Activated T-helper 1 cell treated with anti-CD3 and anti-CD28 coated beads, Interleukin-12 subunit alpha, Interleukin-12 subunit beta, Interleukin-2, Interleukin-4 antibody, amounts not matched to agents 30 ng/mL and 10 ng/mL and 1 ng/mL, durations not matched to agents 14 hours and 24 hours and 36 hours (primary cell): ENCODE measurements at regions of chr5 and their contacts with region 1.

Region 1: DNA sequence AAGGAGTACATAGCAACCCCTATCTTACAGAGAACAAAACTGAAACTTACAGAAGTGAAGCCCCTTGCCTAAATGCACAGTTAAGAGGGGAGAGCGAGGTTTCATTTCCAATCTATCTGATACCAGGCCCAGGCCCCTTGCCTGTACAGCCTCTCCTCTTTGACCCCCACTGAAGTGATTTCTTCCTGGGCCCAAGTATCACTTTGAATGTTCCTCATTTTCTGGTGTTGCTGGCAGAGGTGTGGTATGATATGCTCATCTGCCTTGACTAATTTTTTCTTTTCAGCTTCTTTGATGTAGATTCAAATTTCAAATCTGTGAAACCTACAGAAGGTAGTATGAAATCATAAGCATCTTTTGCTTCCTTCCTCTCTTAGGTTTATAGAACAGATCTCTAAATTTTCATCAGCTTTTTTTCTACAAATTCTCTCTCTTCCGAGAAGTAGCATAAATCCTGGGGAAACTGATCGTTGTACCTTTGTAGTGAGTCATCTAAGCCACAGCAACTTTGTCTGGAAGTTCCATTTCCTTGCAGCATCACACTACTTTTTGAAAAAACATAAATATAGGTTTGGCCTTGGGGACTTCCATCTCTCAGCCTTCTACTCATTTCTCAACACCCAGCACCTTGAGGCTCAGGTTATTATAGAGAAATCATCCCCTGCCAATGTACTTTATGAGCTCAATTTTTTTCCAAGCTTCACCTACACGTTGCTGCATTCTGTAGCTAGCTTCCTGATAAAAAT is 402.4 kb upstream of the PTGER4 start:
- DNase-seq: peak; percentile 31
- H3K4me3 Mint-ChIP-seq: peak overlapping the region; percentile 17
- H3K27ac Mint-ChIP-seq: peak overlapping the region; percentile 93
- H3K4me1 Mint-ChIP-seq: peaks cover 70% of the 10 kb centered on the region
- H3K27me3 Mint-ChIP-seq: no peaks in the 10 kb centered on the region

Region 2: DNA sequence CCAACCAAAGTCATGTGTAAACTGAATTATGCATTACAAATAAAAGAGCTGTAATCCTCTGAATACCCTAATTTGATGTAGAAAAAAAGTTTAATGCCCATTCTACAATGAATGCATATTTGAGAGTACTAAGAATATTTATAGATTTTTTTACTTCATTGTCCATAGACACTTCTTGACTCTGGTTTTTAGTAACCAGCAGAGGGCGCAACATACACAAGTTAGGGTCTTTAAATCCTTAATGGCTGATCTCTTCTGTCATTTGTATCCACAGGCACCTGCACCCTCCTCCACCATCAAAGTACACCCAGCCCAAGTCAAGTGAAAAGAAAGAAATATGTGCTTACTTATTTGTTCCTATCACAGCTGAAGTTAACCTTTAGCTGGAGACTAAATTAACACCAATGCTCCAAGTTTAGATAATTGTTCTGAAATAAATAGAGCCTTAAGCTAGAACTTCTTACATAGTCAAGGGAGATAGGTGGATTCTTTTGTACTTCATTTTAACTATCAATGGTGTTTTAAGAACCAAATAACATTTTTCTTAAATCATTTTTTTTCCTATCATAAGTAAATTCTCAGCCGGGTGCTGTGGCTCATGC is 328.4 kb before region 1 on chr5:
- intact Hi-C with region 1: loop called (anchors 1 kb)
- DNase-seq: peak; percentile 46
- H3K4me3 Mint-ChIP-seq: no peak overlapping the region
- H3K27ac Mint-ChIP-seq: peak overlapping the region; percentile 7
- H3K4me1 Mint-ChIP-seq: peaks cover 6% of the 10 kb centered on the region
- H3K27me3 Mint-ChIP-seq: peaks cover 5% of the 10 kb centered on the region

Region 3: GRCh38 chr5:40258222-40258621 is 19.1 kb before region 1 on chr5:
- intact Hi-C with region 1: loop called (anchors 1 kb)
- DNase-seq: no peak
- H3K4me3 Mint-ChIP-seq: peak overlapping the region; percentile 38
- H3K27ac Mint-ChIP-seq: peak overlapping the region; percentile 83
- H3K4me1 Mint-ChIP-seq: peaks cover 21% of the 10 kb centered on the region
- H3K27me3 Mint-ChIP-seq: peaks cover 3% of the 10 kb centered on the region

Region 4: DNA sequence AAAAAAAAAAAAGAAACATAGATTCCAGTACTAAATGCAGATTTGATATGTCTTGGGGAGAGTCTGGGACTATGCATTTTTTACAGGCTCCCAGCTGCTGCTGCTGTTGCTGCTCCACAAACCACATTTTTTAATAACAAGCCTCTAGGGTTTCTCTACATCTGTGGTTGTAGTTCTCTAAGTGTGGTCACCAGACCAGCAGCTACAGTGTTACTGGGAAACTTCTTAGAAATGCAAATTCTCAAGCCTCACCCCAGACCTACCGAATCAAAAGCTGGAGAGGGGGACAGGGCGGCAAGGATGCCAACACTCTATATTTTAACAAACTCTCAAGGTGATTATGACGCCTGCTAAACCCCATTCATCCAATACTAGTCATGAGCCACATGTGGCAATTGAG is 109.0 kb after region 1 on chr5:
- intact Hi-C with region 1: loop called (anchors 1 kb)
- DNase-seq: peak; percentile 19
- H3K4me3 Mint-ChIP-seq: no peak overlapping the region
- H3K27ac Mint-ChIP-seq: peak overlapping the region; percentile 19
- H3K4me1 Mint-ChIP-seq: peaks cover 88% of the 10 kb centered on the region
- H3K27me3 Mint-ChIP-seq: no peaks in the 10 kb centered on the region

Region 5: GRCh38 chr5:40437452-40437861 is 160.1 kb after region 1 on chr5:
- intact Hi-C with region 1: loop called (anchors 1 kb)
- DNase-seq: no peak
- H3K4me3 Mint-ChIP-seq: peak overlapping the region; percentile 13
- H3K27ac Mint-ChIP-seq: peak overlapping the region; percentile 71
- H3K4me1 Mint-ChIP-seq: peaks cover 84% of the 10 kb centered on the region
- H3K27me3 Mint-ChIP-seq: no peaks in the 10 kb centered on the region

Region 6: DNA sequence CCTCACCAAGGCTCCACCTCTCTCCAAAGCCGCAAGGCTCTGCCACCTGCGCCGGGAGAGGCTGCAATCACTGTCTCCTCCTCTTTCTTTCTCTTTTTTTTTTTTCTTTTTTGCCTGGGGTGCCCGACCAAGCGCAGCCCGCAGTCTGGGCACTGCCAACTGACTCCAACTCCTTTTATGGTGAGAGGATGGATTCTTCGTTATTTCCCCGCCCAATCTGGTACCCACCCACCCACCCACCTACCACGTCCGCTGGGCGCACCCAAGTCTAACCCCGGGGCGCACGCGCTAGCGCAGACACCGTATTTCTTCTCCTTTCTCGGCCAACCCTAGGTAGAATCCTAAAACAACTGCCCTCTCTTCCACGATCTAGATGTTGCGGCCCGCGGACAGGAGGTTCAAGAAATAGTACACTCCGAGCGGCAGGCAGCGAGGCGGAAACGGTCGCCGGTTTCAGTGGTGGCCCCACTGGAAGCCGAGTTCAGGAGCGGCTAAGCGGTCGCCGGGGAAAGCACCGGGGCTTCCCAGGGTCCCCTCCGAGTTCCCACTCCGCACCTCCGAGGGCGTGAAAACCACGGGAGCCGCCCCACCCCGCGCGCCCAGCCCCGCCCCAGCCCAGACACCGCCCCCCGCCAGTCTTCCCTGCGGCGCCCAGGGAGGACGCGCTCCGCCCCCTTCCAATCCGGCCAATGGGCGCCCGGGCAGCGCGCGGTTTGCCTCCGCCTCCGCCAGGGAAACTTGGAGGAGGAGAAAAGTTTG is 402.0 kb after region 1 on chr5:
- intact Hi-C with region 1: loop called (anchors 1 kb)
- DNase-seq: peak; percentile 91
- H3K4me3 Mint-ChIP-seq: peak overlapping the region; percentile 99
- H3K27ac Mint-ChIP-seq: peak overlapping the region; percentile 99
- H3K4me1 Mint-ChIP-seq: peaks cover 66% of the 10 kb centered on the region
- H3K27me3 Mint-ChIP-seq: no peaks in the 10 kb centered on the region

Region 7: DNA sequence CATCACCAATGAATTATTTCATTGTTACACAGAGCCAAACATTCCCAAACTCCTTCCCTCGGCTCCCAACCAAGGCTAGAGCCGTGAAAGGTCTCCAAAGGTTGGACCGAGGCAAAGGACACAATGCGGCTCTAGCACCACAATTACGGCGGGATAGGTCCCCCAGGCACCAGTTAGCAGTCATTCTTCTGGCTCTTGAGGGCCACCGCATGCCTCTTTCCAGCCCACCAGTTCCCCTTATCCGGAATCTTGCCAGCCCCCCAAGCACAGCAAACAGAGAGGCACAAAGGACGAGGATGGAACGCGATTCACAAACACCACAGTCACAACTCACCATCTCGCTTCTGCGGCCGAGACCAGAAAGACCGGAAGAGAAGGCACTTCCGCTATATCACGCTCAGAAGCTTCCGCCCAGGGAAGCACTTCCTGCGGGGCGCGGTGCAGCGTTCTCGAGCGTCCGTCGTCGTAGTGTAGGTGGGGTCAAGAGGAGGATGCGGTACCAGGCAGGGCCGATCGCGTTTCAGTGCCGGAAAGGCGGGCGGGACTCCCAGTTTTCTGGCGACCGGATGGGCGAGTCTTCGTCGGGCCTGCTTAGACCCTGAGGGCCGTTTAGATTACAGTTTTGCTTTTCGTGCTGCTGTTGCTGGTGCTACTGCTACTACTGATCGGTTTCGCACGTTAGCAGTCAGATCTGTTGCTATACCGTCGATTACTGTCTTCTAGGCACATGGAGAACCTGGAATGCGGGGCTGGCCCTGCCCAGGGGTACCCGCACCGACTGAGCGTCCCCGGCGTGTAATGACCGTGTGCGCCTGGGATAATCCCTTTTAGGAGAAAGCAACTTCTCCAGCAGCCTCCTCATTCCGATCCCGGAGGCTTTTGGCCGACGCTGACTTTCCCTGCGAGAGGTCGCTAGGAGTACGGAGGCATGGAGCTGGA is 557.8 kb after region 1 on chr5 and contains the start of gene RPL37:
- intact Hi-C with region 1: loop called (anchors 1 kb)
- DNase-seq: peak; percentile 89
- H3K4me3 Mint-ChIP-seq: peak within 1 kb of the TSS; percentile 95
- H3K27ac Mint-ChIP-seq: peak within 1 kb of the TSS; percentile 90
- H3K4me1 Mint-ChIP-seq: peaks cover 45% of the 10 kb centered on the region
- H3K27me3 Mint-ChIP-seq: no peaks in the 10 kb centered on the region
- total RNA-seq, gene RPL37: 1,451 and 1,473 TPM in 2 replicates

Region 8: GRCh38 chr5:40866291-40866690 is 589.0 kb after region 1 on chr5:
- intact Hi-C with region 1: no loop called
- DNase-seq: no peak
- H3K4me3 Mint-ChIP-seq: no peak overlapping the region
- H3K27ac Mint-ChIP-seq: no peak overlapping the region
- H3K4me1 Mint-ChIP-seq: no peaks in the 10 kb centered on the region
- H3K27me3 Mint-ChIP-seq: peaks cover 8% of the 10 kb centered on the region